Activated T-helper 1 cell treated with anti-CD3 and anti-CD28 coated beads, Interleukin-12 subunit alpha, Interleukin-12 subunit beta, Interleukin-2, Interleukin-4 antibody, amounts not matched to agents 30 ng/mL and 10 ng/mL and 1 ng/mL, durations not matched to agents 14 hours and 24 hours and 36 hours (primary cell): ENCODE measurements at regions of chr17 and their contacts with region 1.

Region 1: GRCh38 chr17:78421484-78422266 is 43.2 kb downstream of the PGS1 start:
- DNase-seq: peak; percentile 63
- H3K4me3 Mint-ChIP-seq: peak overlapping the region; percentile 12
- H3K27ac Mint-ChIP-seq: peak overlapping the region; percentile 64
- H3K4me1 Mint-ChIP-seq: peaks cover 52% of the 10 kb centered on the region
- H3K27me3 Mint-ChIP-seq: no peaks in the 10 kb centered on the region

Region 2: DNA sequence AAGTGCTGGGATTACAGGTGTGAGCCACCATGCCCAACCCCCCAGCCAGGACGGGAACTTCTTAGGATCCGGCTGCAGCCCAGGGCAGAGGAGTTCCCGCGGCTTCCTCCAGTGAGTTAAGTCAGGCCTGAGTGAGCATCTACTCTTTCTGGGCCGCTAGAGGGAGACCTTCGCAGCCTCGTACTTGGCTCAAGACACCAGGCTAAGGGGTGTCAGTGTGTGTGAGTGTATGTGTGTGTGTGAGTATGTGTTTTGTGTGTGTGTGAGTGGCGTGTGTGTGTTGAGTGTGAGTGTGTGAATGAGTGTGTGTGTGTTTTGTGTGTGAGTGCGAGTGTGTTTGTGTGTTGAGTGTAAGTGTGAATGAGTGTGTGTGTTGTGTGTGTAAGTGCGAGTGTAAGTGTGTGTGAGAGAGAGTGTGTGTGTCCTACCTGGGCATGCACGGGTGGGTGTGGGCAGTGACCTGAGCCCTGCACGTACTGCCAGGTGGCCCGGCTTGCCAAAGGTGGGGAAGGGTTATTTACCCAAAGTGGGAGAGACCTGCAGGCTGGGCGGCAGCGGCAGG is 131.8 kb before region 1 on chr17:
- intact Hi-C with region 1: loop called (anchors 1 kb)
- DNase-seq: peak; percentile 68
- H3K4me3 Mint-ChIP-seq: no peak overlapping the region
- H3K27ac Mint-ChIP-seq: no peak overlapping the region
- H3K4me1 Mint-ChIP-seq: peaks cover 6% of the 10 kb centered on the region
- H3K27me3 Mint-ChIP-seq: no peaks in the 10 kb centered on the region

Region 3: DNA sequence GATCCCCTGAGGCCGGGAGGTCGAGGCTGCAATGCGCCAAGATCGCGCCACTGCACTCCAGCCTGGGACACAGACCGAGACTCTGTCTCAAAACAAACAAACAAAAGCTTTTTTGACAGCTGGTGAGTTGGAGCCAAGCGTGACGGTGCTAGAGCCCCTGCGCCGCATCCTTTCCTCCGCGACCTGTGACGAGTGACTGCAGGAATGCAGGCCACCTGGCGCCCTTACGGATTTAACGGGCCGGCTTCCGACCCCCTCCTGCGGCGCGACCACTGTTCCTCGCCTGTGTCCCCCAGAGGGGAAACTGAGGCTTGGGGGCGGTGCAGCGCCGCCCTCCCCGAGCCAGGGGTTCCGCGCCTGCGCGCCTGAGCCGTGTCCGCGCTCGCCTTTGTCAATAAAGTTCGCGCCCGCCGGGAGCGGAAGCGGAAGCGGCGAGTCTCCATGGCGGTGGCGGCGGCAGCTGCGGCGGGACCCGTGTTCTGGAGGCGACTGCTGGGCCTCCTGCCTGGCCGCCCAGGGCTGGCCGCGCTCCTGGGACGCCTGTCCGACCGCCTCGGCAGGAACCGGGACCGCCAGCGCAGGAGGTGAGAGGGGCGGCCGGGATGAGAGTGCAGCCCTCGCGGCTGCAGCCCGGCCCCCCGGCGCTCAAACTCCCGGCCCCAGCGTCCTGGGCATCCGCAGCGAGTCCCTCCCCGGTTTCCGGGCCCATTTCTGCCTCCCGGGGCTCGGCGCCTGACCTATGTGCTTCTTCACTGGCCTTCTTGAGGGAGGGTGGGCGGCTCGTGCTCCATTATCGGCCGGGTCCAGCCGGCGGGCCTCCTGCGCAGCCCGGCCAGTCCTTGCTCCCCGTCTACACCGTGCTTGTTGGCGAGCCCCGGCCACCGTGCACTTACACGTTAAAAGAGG is 43.2 kb before region 1 on chr17 and contains the start of gene PGS1:
- intact Hi-C with region 1: loop called (anchors 1 kb)
- DNase-seq: peak; percentile 84
- H3K4me3 Mint-ChIP-seq: peak within 1 kb of the TSS; percentile 97
- H3K27ac Mint-ChIP-seq: peak within 1 kb of the TSS; percentile 100
- H3K4me1 Mint-ChIP-seq: peaks cover 58% of the 10 kb centered on the region
- H3K27me3 Mint-ChIP-seq: no peaks in the 10 kb centered on the region
- total RNA-seq, gene PGS1: 71.9 and 73.5 TPM in 2 replicates

Region 4: GRCh38 chr17:78397681-78398101 is 24.0 kb before region 1 on chr17:
- intact Hi-C with region 1: no loop called
- DNase-seq: no peak
- H3K4me3 Mint-ChIP-seq: no peak overlapping the region
- H3K27ac Mint-ChIP-seq: no peak overlapping the region
- H3K4me1 Mint-ChIP-seq: peaks cover 8% of the 10 kb centered on the region
- H3K27me3 Mint-ChIP-seq: no peaks in the 10 kb centered on the region